CD8-positive, alpha-beta T cell (primary cell): ENCODE measurements at regions of chr6 and their contacts with region 1.

Region 1: DNA sequence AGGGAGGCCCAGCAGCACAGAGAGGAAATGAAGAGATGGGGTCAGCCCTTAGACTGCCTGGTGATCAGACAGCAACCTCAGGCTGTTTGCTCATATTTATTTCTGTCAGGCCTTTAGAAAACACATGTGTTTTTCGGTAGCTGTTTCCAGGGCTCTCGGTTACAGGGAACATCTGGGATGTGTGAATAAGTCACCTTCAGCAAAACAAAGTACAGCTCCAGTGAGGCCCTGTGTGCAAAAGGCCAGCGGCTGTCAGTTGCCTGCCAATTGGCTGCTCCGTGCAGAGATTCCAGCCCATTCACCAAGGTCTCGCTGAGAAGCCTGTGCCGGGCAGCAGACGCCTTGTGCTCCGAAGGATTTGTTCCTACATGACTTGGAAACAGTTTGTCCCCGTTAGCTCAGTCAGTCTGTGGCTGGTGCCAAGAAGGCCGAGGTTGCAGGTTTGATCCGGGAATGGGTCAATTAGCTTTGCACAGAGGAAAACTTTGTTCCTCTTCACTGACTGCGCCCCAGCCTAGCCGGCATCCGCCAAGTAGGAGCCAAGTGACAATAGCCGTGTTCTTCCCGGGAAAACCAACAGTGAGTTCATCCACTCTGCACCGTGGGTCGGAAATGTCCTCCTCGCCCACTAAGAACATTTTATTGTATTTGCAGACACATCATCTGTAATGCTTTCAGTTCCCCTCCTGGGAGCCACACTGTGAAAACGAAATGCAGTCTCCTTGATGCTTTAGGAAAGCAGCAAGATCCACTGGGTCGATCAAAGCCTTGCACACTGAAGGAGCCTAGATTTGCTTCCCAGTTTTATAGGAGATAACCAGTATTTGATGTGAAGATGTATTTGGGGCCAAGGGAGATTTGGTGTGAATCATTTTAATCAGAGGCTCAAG is 315.4 kb upstream of the CDYL start:
- DNase-seq: no peak
- ATAC-seq: no peak
- H3K4me3 ChIP-seq: no peak overlapping the region
- H3K4me3 Mint-ChIP-seq: no peak overlapping the region
- H3K27ac ChIP-seq: no peak overlapping the region
- H3K27ac Mint-ChIP-seq: no peak overlapping the region
- H3K4me1 ChIP-seq: no peaks in the 10 kb centered on the region
- H3K4me1 Mint-ChIP-seq: no peaks in the 10 kb centered on the region
- H3K27me3 ChIP-seq: no peaks in the 10 kb centered on the region
- H3K27me3 Mint-ChIP-seq: peaks cover 10% of the 10 kb centered on the region
- CTCF ChIP-seq: no peak

Region 2: DNA sequence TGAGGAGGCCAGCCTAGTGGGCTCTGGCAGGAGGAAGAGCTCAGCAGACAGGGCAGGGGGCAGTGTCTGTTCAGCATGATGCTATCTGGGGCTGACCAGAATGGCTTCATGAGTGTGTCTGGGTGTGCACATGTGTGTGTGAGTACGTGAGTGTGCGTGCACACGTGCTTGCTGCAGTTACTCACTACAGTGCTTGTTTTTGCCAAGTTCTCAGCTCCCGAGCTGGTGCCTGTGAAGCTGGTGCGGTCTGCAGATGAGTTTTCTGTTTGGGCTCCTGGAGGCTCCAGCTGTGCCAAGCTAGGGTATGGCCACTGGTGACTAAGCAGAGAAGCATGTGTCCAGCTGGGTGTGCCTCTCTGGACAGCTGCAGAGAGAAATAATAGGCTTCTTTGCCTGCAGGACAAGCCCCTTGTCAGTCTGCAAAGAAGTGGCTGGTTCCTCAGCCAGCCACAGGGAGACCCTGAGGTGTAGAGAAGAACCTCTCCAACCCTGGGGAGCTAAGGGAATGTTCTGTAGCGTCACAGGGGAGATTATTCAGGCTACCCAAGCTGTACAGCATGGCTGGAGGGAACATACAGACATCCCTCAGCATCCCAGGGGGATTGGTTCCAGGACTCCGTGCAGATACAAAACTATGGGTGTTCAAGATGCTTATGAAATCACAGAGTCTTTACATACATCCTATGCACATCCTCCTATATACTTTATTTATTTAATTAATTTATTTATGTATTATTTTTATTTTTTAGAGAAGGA is 651.9 kb before region 1 on chr6:
- CTCF ChIA-PET with region 1: no interaction called
- POLR2A ChIA-PET with region 1: no interaction called
- intact Hi-C with region 1: loop called in 1 of 2 experiments (anchors 5 kb)
- DNase-seq: no peak
- ATAC-seq: no peak
- H3K4me3 ChIP-seq: no peak overlapping the region
- H3K4me3 Mint-ChIP-seq: no peak overlapping the region
- H3K27ac ChIP-seq: no peak overlapping the region
- H3K27ac Mint-ChIP-seq: no peak overlapping the region
- H3K4me1 ChIP-seq: no peaks in the 10 kb centered on the region
- H3K4me1 Mint-ChIP-seq: no peaks in the 10 kb centered on the region
- H3K27me3 ChIP-seq: no peaks in the 10 kb centered on the region
- H3K27me3 Mint-ChIP-seq: peaks cover 8% of the 10 kb centered on the region
- CTCF ChIP-seq: no peak

Region 3: DNA sequence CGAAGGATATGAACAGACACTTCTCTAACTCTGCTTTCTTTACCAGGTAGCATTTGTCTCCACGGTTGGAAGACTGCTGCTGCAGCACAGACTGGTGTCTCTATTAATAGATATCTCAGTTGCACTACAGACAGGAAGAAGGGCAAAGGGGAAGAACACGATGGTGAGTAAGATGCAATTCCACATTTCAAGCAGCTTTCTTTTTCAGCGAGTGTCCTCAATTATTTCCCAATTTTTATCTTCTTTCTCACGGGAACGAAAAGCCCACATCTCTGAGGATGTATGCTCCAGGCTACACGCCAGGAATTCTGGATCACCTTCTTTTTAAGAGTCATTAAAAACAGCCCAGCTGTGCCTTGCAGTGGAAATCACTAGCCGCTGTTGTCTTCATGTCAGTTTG is 13.8 kb before region 1 on chr6:
- CTCF ChIA-PET with region 1: no interaction called
- POLR2A ChIA-PET with region 1: no interaction called
- intact Hi-C with region 1: no loop called
- DNase-seq: no peak
- ATAC-seq: no peak
- H3K4me3 ChIP-seq: no peak overlapping the region
- H3K4me3 Mint-ChIP-seq: no peak overlapping the region
- H3K27ac ChIP-seq: no peak overlapping the region
- H3K27ac Mint-ChIP-seq: no peak overlapping the region
- H3K4me1 ChIP-seq: no peaks in the 10 kb centered on the region
- H3K4me1 Mint-ChIP-seq: no peaks in the 10 kb centered on the region
- H3K27me3 ChIP-seq: no peaks in the 10 kb centered on the region
- H3K27me3 Mint-ChIP-seq: peaks cover 15% of the 10 kb centered on the region
- CTCF ChIP-seq: no peak

Region 4: DNA sequence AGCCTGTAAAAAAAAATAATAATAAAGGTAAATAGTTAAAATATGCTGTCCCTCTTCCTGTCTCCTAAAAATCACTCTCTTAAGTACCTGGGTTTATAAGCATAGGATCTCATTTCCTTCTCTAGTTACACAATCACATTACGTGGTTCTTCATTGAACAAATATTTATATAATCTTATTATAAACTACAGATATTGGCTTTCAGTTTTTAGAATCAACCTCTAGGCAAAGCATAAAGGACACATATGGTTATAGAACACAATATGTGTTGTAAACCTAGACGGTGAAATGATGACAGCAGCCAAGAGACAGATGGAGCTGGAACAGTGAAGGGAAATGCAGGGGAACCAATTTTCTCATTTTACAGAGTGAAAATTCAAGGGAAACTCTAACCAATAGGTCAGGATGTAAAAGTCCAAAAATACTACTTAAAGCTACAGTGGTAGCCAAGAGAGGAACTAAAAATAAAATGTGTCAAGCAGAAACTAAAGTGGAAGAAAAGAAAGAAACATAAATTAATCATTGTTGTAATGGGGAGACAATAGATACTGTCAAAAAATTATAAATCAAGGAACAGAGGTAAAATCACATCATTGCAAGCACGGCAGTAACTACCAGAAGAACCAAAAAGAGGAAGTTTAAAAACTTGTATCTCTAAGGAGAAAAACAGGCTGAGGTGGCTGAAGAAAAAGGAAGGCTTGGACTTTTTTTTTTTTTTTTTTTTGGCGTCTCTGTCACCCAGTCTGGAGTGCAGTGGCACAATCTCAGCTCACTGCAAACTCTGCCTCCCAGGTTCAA is 232.5 kb after region 1 on chr6:
- CTCF ChIA-PET with region 1: no interaction called
- POLR2A ChIA-PET with region 1: no interaction called
- intact Hi-C with region 1: no loop called
- DNase-seq: no peak
- ATAC-seq: no peak
- H3K4me3 ChIP-seq: no peak overlapping the region
- H3K4me3 Mint-ChIP-seq: no peak overlapping the region
- H3K27ac ChIP-seq: no peak overlapping the region
- H3K27ac Mint-ChIP-seq: no peak overlapping the region
- H3K4me1 ChIP-seq: no peaks in the 10 kb centered on the region
- H3K4me1 Mint-ChIP-seq: no peaks in the 10 kb centered on the region
- H3K27me3 ChIP-seq: no peaks in the 10 kb centered on the region
- H3K27me3 Mint-ChIP-seq: peaks cover 25% of the 10 kb centered on the region
- CTCF ChIP-seq: no peak

Region 5: GRCh38 chr6:5030596-5031136 is 569.8 kb after region 1 on chr6:
- CTCF ChIA-PET with region 1: no interaction called
- POLR2A ChIA-PET with region 1: no interaction called
- intact Hi-C with region 1: loop called in 1 of 2 experiments (anchors 10 kb)
- DNase-seq: peak; percentile 44 to 79 (median 69)
- ATAC-seq: peak; percentile 84
- H3K4me3 ChIP-seq: no peak overlapping the region
- H3K4me3 Mint-ChIP-seq: no peak overlapping the region
- H3K27ac ChIP-seq: no peak overlapping the region
- H3K27ac Mint-ChIP-seq: no peak overlapping the region
- H3K4me1 ChIP-seq: no peaks in the 10 kb centered on the region
- H3K4me1 Mint-ChIP-seq: peaks cover 15% of the 10 kb centered on the region
- H3K27me3 ChIP-seq: peaks cover 0 to 2% of the 10 kb centered on the region in 2 experiments
- H3K27me3 Mint-ChIP-seq: no peaks in the 10 kb centered on the region
- CTCF ChIP-seq: peak; percentile 65